T-cell (primary cell): ENCODE measurements at regions of chr12 and their contacts with region 1.

Region 1: GRCh38 chr12:11581179-11581755 is 68.2 kb upstream of the ETV6 start:
- DNase-seq: peak in 34 of 35 experiments; percentile 6 to 85 (median 58)
- ATAC-seq: no peak
- H3K4me3 ChIP-seq: no peak overlapping the region
- H3K4me3 Mint-ChIP-seq: no peak overlapping the region
- H3K27ac ChIP-seq: no peak overlapping the region
- H3K27ac Mint-ChIP-seq: no peak overlapping the region
- H3K4me1 ChIP-seq: peaks cover 0 to 3% of the 10 kb centered on the region in 2 experiments
- H3K4me1 Mint-ChIP-seq: peaks cover 2 to 5% (median 2%) of the 10 kb centered on the region in 3 donors
- H3K27me3 ChIP-seq: no peaks in the 10 kb centered on the region
- H3K27me3 Mint-ChIP-seq: peaks cover 2 to 3% of the 10 kb centered on the region in 2 donors

Region 2: GRCh38 chr12:12039897-12040296 is 458.6 kb after region 1 on chr12:
- CTCF ChIA-PET with region 1: interaction called, 54 to 108 read pairs
- POLR2A ChIA-PET with region 1: no interaction called
- DNase-seq: no peak
- ATAC-seq: no peak
- H3K4me3 ChIP-seq: no peak overlapping the region
- H3K4me3 Mint-ChIP-seq: no peak overlapping the region
- H3K27ac ChIP-seq: no peak overlapping the region
- H3K27ac Mint-ChIP-seq: no peak overlapping the region
- H3K4me1 ChIP-seq: no peaks in the 10 kb centered on the region
- H3K4me1 Mint-ChIP-seq: no peaks in the 10 kb centered on the region
- H3K27me3 ChIP-seq: peaks cover 0 to 3% of the 10 kb centered on the region in 2 experiments
- H3K27me3 Mint-ChIP-seq: peaks cover 0 to 8% of the 10 kb centered on the region in 2 donors

Region 3: DNA sequence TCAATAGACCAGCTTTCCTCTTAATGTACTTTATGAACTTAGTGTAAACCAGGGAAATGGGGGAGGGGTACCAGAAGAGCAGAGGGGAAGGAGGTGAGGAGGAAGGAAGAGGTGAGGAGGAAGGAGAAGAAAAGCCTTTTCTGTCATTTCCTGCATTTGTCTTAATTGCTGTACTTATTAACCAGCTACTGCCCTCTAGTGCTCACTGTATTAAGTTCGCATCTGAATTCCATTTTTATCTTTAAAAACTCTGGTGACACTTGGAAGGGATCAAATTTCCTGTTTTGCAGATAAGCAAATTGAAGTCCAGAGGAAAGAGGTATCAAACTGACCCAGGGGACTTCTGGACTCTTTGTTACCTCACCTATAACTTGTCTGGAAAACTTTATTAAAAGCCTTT is 746.5 kb after region 1 on chr12:
- CTCF ChIA-PET with region 1: interaction called, 7 to 10 read pairs
- POLR2A ChIA-PET with region 1: no interaction called
- DNase-seq: peak in 14 of 35 experiments; percentile 3 to 77 (median 15)
- ATAC-seq: peak; percentile 65 to 83 (median 80)
- H3K4me3 ChIP-seq: no peak overlapping the region
- H3K4me3 Mint-ChIP-seq: no peak overlapping the region
- H3K27ac ChIP-seq: no peak overlapping the region
- H3K27ac Mint-ChIP-seq: peak overlapping the region; percentile 57 to 82
- H3K4me1 ChIP-seq: peaks cover 0 to 5% of the 10 kb centered on the region in 2 experiments
- H3K4me1 Mint-ChIP-seq: peaks cover 8 to 10% (median 8%) of the 10 kb centered on the region in 3 donors
- H3K27me3 ChIP-seq: no peaks in the 10 kb centered on the region
- H3K27me3 Mint-ChIP-seq: no peaks in the 10 kb centered on the region